ENCODE measurements at regions of chr2 and their contacts with region 1.

Region 1: DNA sequence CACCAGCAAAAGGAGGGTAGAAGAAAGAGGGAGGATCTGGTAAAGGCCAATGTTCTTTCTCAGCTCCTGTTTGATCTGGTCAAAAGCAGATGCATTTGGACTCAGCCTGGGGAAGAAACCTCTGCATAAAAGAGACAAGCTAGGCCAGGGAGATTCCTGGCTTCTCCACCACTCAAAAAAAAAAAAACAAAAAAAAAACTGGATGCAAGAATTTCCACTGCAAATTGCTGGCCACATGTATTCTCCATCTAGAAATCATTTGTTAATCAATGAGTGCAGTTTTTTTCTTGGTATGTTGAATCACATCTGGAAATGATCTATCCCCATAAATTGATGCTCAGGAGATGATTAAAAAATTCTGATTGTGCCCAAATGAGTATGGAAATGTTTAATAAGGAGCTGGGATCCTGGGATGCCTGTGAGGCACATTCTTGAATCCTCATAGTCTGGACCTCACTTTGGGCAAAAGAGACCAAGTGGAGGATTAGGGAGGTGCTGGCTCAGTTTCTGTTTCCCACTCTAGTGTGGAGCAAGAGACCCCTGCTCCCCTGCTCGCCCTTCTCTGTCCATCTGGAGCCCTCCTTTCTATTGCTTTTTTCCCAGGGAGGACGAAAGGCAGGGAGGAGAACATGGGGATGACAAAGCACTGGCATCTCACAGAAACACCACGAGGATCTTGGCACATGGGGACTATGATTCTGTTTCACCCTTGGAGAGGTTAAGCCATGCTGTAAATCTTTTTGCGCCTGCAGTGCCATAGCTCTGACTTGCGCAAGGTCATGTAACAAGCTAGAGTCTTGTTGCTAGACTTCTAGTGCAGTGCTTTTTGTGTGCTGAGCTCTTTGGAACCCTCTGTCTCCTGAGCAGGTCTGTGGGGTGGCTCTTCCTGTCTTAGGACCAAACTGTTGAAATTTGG is 57.6 kb downstream of the APOB start:
- DNase-seq: no peak
- H3K4me3 ChIP-seq: no peak overlapping the region
- H3K27ac ChIP-seq: no peak overlapping the region
- H3K4me1 ChIP-seq: no peaks in the 10 kb centered on the region
- H3K27me3 ChIP-seq: no peaks in the 10 kb centered on the region
- CTCF ChIP-seq: no peak
- POLR2A ChIP-seq: no peak

Region 2: GRCh38 chr2:20682167-20682920 is 303.9 kb before region 1 on chr2:
- intact Hi-C with region 1: no loop called
- DNase-seq: no peak
- H3K4me3 ChIP-seq: no peak overlapping the region
- H3K27ac ChIP-seq: no peak overlapping the region
- H3K4me1 ChIP-seq: no peaks in the 10 kb centered on the region
- H3K27me3 ChIP-seq: no peaks in the 10 kb centered on the region
- CTCF ChIP-seq: peak in 2 of 4 experiments; percentile 23 to 46
- POLR2A ChIP-seq: no peak

Region 3: DNA sequence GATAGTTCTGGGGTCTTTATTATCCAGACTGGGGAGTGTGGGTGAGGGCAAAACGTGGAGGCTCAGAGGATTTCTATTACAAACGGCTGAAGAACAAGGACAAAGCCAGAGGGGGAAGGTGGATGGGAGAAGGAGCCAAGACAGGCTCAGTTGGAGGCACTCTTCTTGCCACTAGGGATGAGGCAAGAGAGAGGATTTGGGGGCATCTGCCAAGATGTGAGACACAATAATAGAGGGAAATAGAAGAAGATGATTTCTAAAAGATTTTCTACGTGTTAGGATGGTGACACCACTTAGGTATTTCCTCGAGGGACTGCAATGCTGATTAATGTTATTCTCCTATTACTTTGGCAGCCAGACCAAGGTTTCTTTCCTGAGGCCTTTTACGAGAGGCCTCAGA is 14.2 kb before region 1 on chr2:
- intact Hi-C with region 1: loop called (anchors 2 kb)
- DNase-seq: no peak
- H3K4me3 ChIP-seq: no peak overlapping the region
- H3K27ac ChIP-seq: peak overlapping the region; percentile 15 to 31
- H3K4me1 ChIP-seq: no peaks in the 10 kb centered on the region
- H3K27me3 ChIP-seq: no peaks in the 10 kb centered on the region
- CTCF ChIP-seq: no peak
- POLR2A ChIP-seq: no peak